ENCODE measurements at regions of chr16 and their contacts with region 1.

Region 1: GRCh38 chr16:85675251-85675927 is 13.4 kb downstream of the GINS2 start:
- DNase-seq: peak in 1 of 2 experiments; percentile 52
- H3K4me3 ChIP-seq: no peak overlapping the region
- H3K4me3 Mint-ChIP-seq: no peak overlapping the region
- H3K27ac Mint-ChIP-seq: no peak overlapping the region
- H3K4me1 ChIP-seq: peaks cover 11% of the 10 kb centered on the region; the same call in 1 of the 2 replicates
- H3K4me1 Mint-ChIP-seq: peaks cover 9% of the 10 kb centered on the region
- H3K27me3 ChIP-seq: no peaks in the 10 kb centered on the region
- H3K27me3 Mint-ChIP-seq: no peaks in the 10 kb centered on the region
- CTCF ChIP-seq: peak; percentile 72 to 77

Region 2: DNA sequence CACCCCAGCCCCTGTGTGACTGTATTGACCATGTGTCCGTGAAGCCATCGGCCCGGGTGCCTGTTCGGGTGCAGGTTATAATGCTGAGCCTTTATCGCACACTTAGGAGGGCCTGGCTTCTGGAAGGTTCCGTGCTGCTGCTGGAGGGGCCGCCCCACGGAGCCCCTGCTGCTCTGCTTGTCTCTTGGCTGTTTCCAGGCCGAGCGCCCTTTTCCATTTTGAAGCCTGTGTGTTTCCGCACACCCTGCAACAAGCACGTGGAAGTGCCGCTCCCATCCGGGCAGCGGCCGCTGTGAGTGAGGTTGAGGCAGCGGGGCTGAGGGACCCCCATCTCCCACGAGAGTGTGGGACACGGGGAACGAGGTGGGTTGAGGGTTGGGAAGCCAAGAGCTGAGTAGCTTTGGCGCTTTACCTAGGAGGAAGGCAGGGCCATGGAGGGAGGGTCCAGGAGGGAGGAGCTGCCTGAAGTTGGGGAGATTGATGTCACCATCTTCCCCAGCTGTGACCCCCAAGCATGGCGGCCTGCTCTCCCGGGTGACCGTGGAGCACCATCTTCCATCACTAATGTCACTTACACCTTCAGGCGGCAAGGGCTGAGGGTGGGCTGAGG is 262.4 kb before region 1 on chr16:
- CTCF ChIA-PET with region 1: no interaction called
- POLR2A ChIA-PET with region 1: no interaction called
- intact Hi-C with region 1: no loop called
- DNase-seq: peak; percentile 0 to 21
- H3K4me3 ChIP-seq: no peak overlapping the region
- H3K4me3 Mint-ChIP-seq: no peak overlapping the region
- H3K27ac Mint-ChIP-seq: no peak overlapping the region
- H3K4me1 ChIP-seq: peaks cover 6% of the 10 kb centered on the region
- H3K4me1 Mint-ChIP-seq: no peaks in the 10 kb centered on the region
- H3K27me3 ChIP-seq: no peaks in the 10 kb centered on the region
- H3K27me3 Mint-ChIP-seq: no peaks in the 10 kb centered on the region
- CTCF ChIP-seq: no peak

Region 3: DNA sequence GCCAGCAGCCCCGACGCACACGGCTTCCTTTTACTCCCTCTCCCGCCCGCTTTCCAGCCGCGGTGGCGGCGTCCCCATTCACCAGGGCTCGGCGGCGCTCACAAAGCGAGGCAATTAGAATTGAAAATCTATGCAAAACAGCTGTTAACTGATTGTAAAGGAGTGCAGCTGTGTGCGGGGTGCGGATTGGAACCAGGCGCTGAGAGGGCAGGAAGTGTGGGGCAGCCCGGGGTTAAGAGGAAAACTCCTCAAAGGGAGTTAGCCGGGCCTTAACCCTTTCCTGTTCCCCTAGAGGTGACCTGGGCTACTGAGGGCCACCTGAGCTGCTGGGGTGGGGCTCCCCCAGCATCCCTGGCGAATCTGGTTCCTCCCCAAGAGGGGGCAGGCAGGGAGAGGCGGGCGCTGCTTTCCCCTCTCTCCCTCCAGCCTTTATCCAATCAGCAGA is 68.0 kb before region 1 on chr16:
- CTCF ChIA-PET with region 1: no interaction called
- POLR2A ChIA-PET with region 1: no interaction called
- intact Hi-C with region 1: no loop called
- DNase-seq: no peak
- H3K4me3 ChIP-seq: no peak overlapping the region
- H3K4me3 Mint-ChIP-seq: no peak overlapping the region
- H3K27ac Mint-ChIP-seq: no peak overlapping the region
- H3K4me1 ChIP-seq: peaks cover 36% of the 10 kb centered on the region
- H3K4me1 Mint-ChIP-seq: peaks cover 24% of the 10 kb centered on the region
- H3K27me3 ChIP-seq: no peaks in the 10 kb centered on the region
- H3K27me3 Mint-ChIP-seq: no peaks in the 10 kb centered on the region
- CTCF ChIP-seq: no peak

Region 4: GRCh38 chr16:85688586-85689284 is 13.3 kb after region 1 on chr16 and contains the start of gene GINS2:
- CTCF ChIA-PET with region 1: interaction called, 5 read pairs
- POLR2A ChIA-PET with region 1: interaction called, 3 read pairs
- intact Hi-C with region 1: loop called (anchors 1 kb)
- DNase-seq: peak; percentile 97 to 98
- H3K4me3 ChIP-seq: peak within 1 kb of the TSS; percentile 96
- H3K4me3 Mint-ChIP-seq: peak within 1 kb of the TSS; percentile 79
- H3K27ac Mint-ChIP-seq: peak within 1 kb of the TSS; percentile 66
- H3K4me1 ChIP-seq: peaks cover 32% of the 10 kb centered on the region
- H3K4me1 Mint-ChIP-seq: peaks cover 15% of the 10 kb centered on the region
- H3K27me3 ChIP-seq: no peaks in the 10 kb centered on the region
- H3K27me3 Mint-ChIP-seq: no peaks in the 10 kb centered on the region
- CTCF ChIP-seq: no peak
- total RNA-seq, gene GINS2: 52.5 and 62.9 TPM in 2 replicates

Region 5: GRCh38 chr16:85709766-85710585 is 34.6 kb after region 1 on chr16:
- CTCF ChIA-PET with region 1: interaction called, 10 read pairs
- POLR2A ChIA-PET with region 1: no interaction called
- intact Hi-C with region 1: loop called (anchors 1 kb)
- DNase-seq: no peak
- H3K4me3 ChIP-seq: no peak overlapping the region
- H3K4me3 Mint-ChIP-seq: no peak overlapping the region
- H3K27ac Mint-ChIP-seq: no peak overlapping the region
- H3K4me1 ChIP-seq: peaks cover 7% of the 10 kb centered on the region
- H3K4me1 Mint-ChIP-seq: peaks cover 7% of the 10 kb centered on the region
- H3K27me3 ChIP-seq: no peaks in the 10 kb centered on the region
- H3K27me3 Mint-ChIP-seq: no peaks in the 10 kb centered on the region
- CTCF ChIP-seq: no peak